ENCODE measurements at regions of chr12 and their contacts with region 1.

Region 1: DNA sequence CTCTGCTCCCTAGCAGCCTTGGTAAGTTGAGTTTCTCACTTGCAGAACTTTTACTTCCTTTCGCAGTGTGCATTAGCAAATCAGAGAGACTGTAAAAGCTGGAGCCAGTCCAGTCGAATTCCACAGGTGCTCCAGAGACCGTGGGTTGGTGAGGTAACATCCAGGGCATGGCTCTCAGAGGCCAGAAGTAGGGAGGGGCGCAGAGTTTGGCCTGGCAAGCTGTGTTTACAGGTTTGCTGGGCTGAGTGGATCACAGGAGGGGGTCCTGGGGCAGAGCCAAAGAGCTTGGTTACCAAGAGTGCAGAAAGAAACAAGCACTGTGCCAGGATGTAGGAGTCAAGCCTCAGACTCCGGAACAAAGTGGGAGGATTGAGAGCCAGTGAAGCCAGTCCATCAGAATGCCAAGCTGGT is 10.2 kb upstream of the BHLHE41 start:
- DNase-seq: peak; percentile 93 to 95
- H3K4me3 ChIP-seq: no peak overlapping the region
- H3K27ac ChIP-seq: peak overlapping the region; percentile 45
- H3K4me1 ChIP-seq: peaks cover 33% of the 10 kb centered on the region
- H3K27me3 ChIP-seq: no peaks in the 10 kb centered on the region
- CTCF ChIP-seq: no peak

Region 2: GRCh38 chr12:26177283-26177682 is 42.3 kb after region 1 on chr12:
- CTCF ChIA-PET with region 1: no interaction called
- POLR2A ChIA-PET with region 1: interaction called, 10 read pairs
- intact Hi-C with region 1: no loop called
- DNase-seq: no peak
- H3K4me3 ChIP-seq: no peak overlapping the region
- H3K27ac ChIP-seq: no peak overlapping the region
- H3K4me1 ChIP-seq: no peaks in the 10 kb centered on the region
- H3K27me3 ChIP-seq: no peaks in the 10 kb centered on the region
- CTCF ChIP-seq: no peak

Region 3: DNA sequence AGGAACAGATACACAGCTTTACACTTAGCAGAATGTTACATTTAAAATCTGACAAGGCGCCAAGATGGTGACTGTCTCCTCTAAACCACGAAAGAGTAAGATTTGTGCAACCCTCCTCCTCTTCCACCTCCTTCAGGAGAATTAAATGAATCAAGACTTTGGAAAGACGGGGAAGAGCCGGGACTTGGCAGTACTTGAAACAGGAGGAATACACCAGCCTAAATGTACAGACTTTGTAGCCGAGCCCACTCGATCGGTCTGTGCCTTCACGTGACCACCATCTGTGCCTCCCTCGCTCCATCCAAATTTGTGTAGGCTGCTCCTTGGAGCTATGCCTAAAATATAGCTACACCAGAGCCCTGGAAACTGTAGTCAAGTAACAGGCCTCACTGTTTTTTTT is 98.6 kb after region 1 on chr12:
- CTCF ChIA-PET with region 1: no interaction called
- POLR2A ChIA-PET with region 1: no interaction called
- intact Hi-C with region 1: no loop called
- DNase-seq: no peak
- H3K4me3 ChIP-seq: no peak overlapping the region
- H3K27ac ChIP-seq: no peak overlapping the region
- H3K4me1 ChIP-seq: peaks cover 25% of the 10 kb centered on the region
- H3K27me3 ChIP-seq: no peaks in the 10 kb centered on the region
- CTCF ChIP-seq: no peak

Measured in PC-9 (cell line).